ENCODE measurements at regions of chr9 and their contacts with region 1.

Region 1: GRCh38 chr9:35814841-35815543 is at the start of gene HINT2:
- DNase-seq: peak; percentile 99
- ATAC-seq: peak; percentile 85
- H3K4me3 Mint-ChIP-seq: peak within 1 kb of the TSS; percentile 93
- H3K27ac Mint-ChIP-seq: peak within 1 kb of the TSS; percentile 98
- H3K4me1 Mint-ChIP-seq: peaks cover 33% of the 10 kb centered on the region
- H3K27me3 Mint-ChIP-seq: no peaks in the 10 kb centered on the region
- total RNA-seq, gene HINT2: 47.4 to 61.1 TPM

Region 2: GRCh38 chr9:34637356-34638137 is 1177.4 kb before region 1 on chr9 and contains the start of gene SIGMAR1:
- CTCF ChIA-PET with region 1: no interaction called
- POLR2A ChIA-PET with region 1: no interaction called
- intact Hi-C with region 1: loop called in 1 of 2 experiments (anchors 10 kb)
- DNase-seq: peak; percentile 96
- ATAC-seq: peak; percentile 94
- H3K4me3 Mint-ChIP-seq: peak within 1 kb of the TSS; percentile 84
- H3K27ac Mint-ChIP-seq: peak within 1 kb of the TSS; percentile 92
- H3K4me1 Mint-ChIP-seq: peaks cover 40% of the 10 kb centered on the region
- H3K27me3 Mint-ChIP-seq: no peaks in the 10 kb centered on the region
- total RNA-seq, gene SIGMAR1: 63.6 to 68.0 TPM

Region 3: GRCh38 chr9:35111001-35111933 is 703.7 kb before region 1 on chr9:
- CTCF ChIA-PET with region 1: no interaction called
- POLR2A ChIA-PET with region 1: no interaction called
- intact Hi-C with region 1: loop called (anchors 1 to 10 kb)
- DNase-seq: peak; percentile 98
- ATAC-seq: peak; percentile 82
- H3K4me3 Mint-ChIP-seq: peak overlapping the region; percentile 63
- H3K27ac Mint-ChIP-seq: peak overlapping the region; percentile 90
- H3K4me1 Mint-ChIP-seq: peaks cover 48% of the 10 kb centered on the region
- H3K27me3 Mint-ChIP-seq: no peaks in the 10 kb centered on the region

Region 4: GRCh38 chr9:35657546-35658136 is 157.4 kb before region 1 on chr9 and contains the start of gene RMRP:
- CTCF ChIA-PET with region 1: interaction called, 3 read pairs
- POLR2A ChIA-PET with region 1: no interaction called
- intact Hi-C with region 1: loop called (anchors 1 to 5 kb)
- DNase-seq: peak; percentile 97
- ATAC-seq: peak; percentile 95
- H3K4me3 Mint-ChIP-seq: peak within 1 kb of the TSS; percentile 80
- H3K27ac Mint-ChIP-seq: peak within 1 kb of the TSS; percentile 98
- H3K4me1 Mint-ChIP-seq: peaks cover 64% of the 10 kb centered on the region
- H3K27me3 Mint-ChIP-seq: peaks cover 2% of the 10 kb centered on the region
- total RNA-seq, gene RMRP: 894 to 11,462 TPM

Region 5: GRCh38 chr9:35790385-35791296 is 24.4 kb before region 1 on chr9:
- CTCF ChIA-PET with region 1: interaction called, 16 read pairs
- POLR2A ChIA-PET with region 1: no interaction called
- intact Hi-C with region 1: no loop called
- DNase-seq: peak; percentile 67
- ATAC-seq: peak; percentile 94
- H3K4me3 Mint-ChIP-seq: no peak overlapping the region
- H3K27ac Mint-ChIP-seq: no peak overlapping the region
- H3K4me1 Mint-ChIP-seq: peaks cover 3% of the 10 kb centered on the region
- H3K27me3 Mint-ChIP-seq: no peaks in the 10 kb centered on the region

Region 6: GRCh38 chr9:36190388-36191287 is 375.6 kb after region 1 on chr9 and contains the start of gene CLTA:
- CTCF ChIA-PET with region 1: interaction called, 3 read pairs
- POLR2A ChIA-PET with region 1: no interaction called
- intact Hi-C with region 1: loop called in 1 of 2 experiments (anchors 5 kb)
- DNase-seq: peak; percentile 96
- ATAC-seq: peak; percentile 99
- H3K4me3 Mint-ChIP-seq: peak within 1 kb of the TSS; percentile 95
- H3K27ac Mint-ChIP-seq: peak within 1 kb of the TSS; percentile 88
- H3K4me1 Mint-ChIP-seq: peaks cover 45% of the 10 kb centered on the region
- H3K27me3 Mint-ChIP-seq: no peaks in the 10 kb centered on the region
- total RNA-seq, gene CLTA: 123 to 133 TPM